ENCODE measurements at regions of chr11 and their contacts with region 1.

Region 1: GRCh38 chr11:82718307-82718706 is 15.4 kb downstream of the FAM181B start:
- DNase-seq: peak; percentile 39
- ATAC-seq: no peak
- H3K4me3 ChIP-seq: no peak overlapping the region
- H3K4me3 Mint-ChIP-seq: no peak overlapping the region
- H3K27ac ChIP-seq: no peak overlapping the region
- H3K27ac Mint-ChIP-seq: no peak overlapping the region
- H3K4me1 ChIP-seq: no peaks in the 10 kb centered on the region
- H3K4me1 Mint-ChIP-seq: peaks cover 2% of the 10 kb centered on the region
- H3K27me3 ChIP-seq: peaks cover 0 to under 1% (median 0%) of the 10 kb centered on the region in 4 experiments
- H3K27me3 Mint-ChIP-seq: no peaks in the 10 kb centered on the region
- CTCF ChIP-seq: peak; percentile 76

Region 2: GRCh38 chr11:82686211-82686610 is 32.1 kb before region 1 on chr11:
- CTCF ChIA-PET with region 1: no interaction called
- POLR2A ChIA-PET with region 1: no interaction called
- intact Hi-C with region 1: no loop called
- DNase-seq: no peak
- ATAC-seq: no peak
- H3K4me3 ChIP-seq: no peak overlapping the region
- H3K4me3 Mint-ChIP-seq: no peak overlapping the region
- H3K27ac ChIP-seq: no peak overlapping the region
- H3K27ac Mint-ChIP-seq: no peak overlapping the region
- H3K4me1 ChIP-seq: no peaks in the 10 kb centered on the region
- H3K4me1 Mint-ChIP-seq: no peaks in the 10 kb centered on the region
- H3K27me3 ChIP-seq: peaks cover 0 to 17% (median 1%) of the 10 kb centered on the region in 4 experiments
- H3K27me3 Mint-ChIP-seq: peaks cover 26% of the 10 kb centered on the region
- CTCF ChIP-seq: no peak

Region 3: DNA sequence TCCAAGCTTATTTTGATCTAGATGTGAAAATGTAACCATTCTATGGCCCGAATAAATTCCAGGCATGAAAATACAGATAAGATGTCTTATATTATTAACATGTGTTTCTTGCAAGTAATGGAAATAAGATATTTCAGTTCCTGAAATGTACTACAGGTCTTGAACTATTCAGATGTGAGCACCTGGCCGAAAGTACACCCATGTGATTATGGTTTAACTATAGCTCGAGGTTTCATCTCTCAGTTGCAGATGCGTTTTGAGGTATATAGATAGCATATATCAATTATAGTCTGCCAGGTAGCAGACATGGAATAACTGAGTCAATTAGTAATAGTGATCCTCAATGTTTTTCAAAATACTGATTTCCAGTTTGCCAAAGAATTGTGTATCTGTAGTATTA is 251.5 kb after region 1 on chr11:
- CTCF ChIA-PET with region 1: no interaction called
- POLR2A ChIA-PET with region 1: no interaction called
- intact Hi-C with region 1: no loop called
- DNase-seq: peak; percentile 46
- ATAC-seq: peak; percentile 76
- H3K4me3 ChIP-seq: peak overlapping the region in 1 of 5 experiments; percentile 15
- H3K4me3 Mint-ChIP-seq: peak overlapping the region; percentile 37
- H3K27ac ChIP-seq: peak overlapping the region; percentile 26 to 52
- H3K27ac Mint-ChIP-seq: peak overlapping the region; percentile 17
- H3K4me1 ChIP-seq: peaks cover 29% of the 10 kb centered on the region in 2 donors
- H3K4me1 Mint-ChIP-seq: peaks cover 43% of the 10 kb centered on the region
- H3K27me3 ChIP-seq: no peaks in the 10 kb centered on the region
- H3K27me3 Mint-ChIP-seq: no peaks in the 10 kb centered on the region
- CTCF ChIP-seq: no peak

Region 4: GRCh38 chr11:83724008-83724461 is 1005.7 kb after region 1 on chr11:
- CTCF ChIA-PET with region 1: interaction called, 5 read pairs
- POLR2A ChIA-PET with region 1: no interaction called
- intact Hi-C with region 1: loop called (anchors 10 kb)
- DNase-seq: peak; percentile 68
- ATAC-seq: peak; percentile 36
- H3K4me3 ChIP-seq: peak overlapping the region in 3 of 5 experiments; percentile 33 to 51 (median 34)
- H3K4me3 Mint-ChIP-seq: peak overlapping the region; percentile 80
- H3K27ac ChIP-seq: no peak overlapping the region
- H3K27ac Mint-ChIP-seq: peak overlapping the region; percentile 51
- H3K4me1 ChIP-seq: peaks cover 20 to 22% of the 10 kb centered on the region in 2 donors
- H3K4me1 Mint-ChIP-seq: peaks cover 25% of the 10 kb centered on the region
- H3K27me3 ChIP-seq: peaks cover 0 to 8% (median 3%) of the 10 kb centered on the region in 4 experiments
- H3K27me3 Mint-ChIP-seq: peaks cover 22% of the 10 kb centered on the region
- CTCF ChIP-seq: peak; percentile 42

Region 5: GRCh38 chr11:83819933-83820549 is 1101.7 kb after region 1 on chr11:
- CTCF ChIA-PET with region 1: interaction called, 117 read pairs
- POLR2A ChIA-PET with region 1: no interaction called
- intact Hi-C with region 1: loop called (anchors 1 kb)
- DNase-seq: peak; percentile 36
- ATAC-seq: no peak
- H3K4me3 ChIP-seq: no peak overlapping the region
- H3K4me3 Mint-ChIP-seq: no peak overlapping the region
- H3K27ac ChIP-seq: no peak overlapping the region
- H3K27ac Mint-ChIP-seq: no peak overlapping the region
- H3K4me1 ChIP-seq: no peaks in the 10 kb centered on the region
- H3K4me1 Mint-ChIP-seq: no peaks in the 10 kb centered on the region
- H3K27me3 ChIP-seq: no peaks in the 10 kb centered on the region
- H3K27me3 Mint-ChIP-seq: peaks cover 6% of the 10 kb centered on the region
- CTCF ChIP-seq: peak; percentile 67